ENCODE measurements at regions of chr1 and their contacts with region 1.

Region 1: DNA sequence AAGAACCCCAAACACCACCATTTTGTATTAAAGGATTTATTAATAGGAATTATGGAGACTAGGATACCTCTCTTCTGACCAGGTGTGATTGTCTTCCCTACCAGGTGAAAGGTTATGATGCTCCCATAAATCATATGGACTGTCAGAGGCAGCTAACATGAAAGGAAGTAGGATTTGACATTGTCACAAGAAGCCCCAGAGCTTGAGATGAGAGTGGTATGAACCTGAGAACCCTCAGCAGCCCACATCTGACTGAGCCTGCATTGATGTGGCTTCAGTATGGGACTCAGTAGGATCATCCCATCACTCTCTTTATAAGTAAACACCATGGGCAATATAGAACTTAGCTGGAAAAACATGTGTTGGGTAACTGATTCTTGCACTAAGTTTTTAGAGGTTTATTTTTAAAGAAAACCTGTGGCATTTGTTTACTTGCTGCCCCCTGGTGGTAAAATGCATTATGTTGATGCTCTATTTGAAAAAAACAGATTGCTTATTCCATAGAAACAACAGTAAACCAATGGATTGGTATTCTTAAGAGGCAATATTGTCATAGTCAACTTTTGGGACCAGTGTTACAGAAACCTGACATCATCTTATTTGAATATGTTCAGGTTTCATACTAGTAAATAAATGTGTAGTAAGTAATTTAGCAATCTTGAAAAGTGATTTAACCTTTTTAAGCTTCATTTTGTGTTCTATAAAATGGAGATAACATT is 16.6 kb upstream of the CACYBP start:
- H3K4me3 ChIP-seq: no peak overlapping the region
- H3K27ac ChIP-seq: no peak overlapping the region
- H3K4me1 ChIP-seq: no peaks in the 10 kb centered on the region
- CTCF ChIP-seq: no peak

Region 2: GRCh38 chr1:174769961-174770549 is 213.1 kb before region 1 on chr1:
- CTCF ChIA-PET with region 1: interaction called, 19 read pairs
- POLR2A ChIA-PET with region 1: no interaction called
- H3K4me3 ChIP-seq: no peak overlapping the region
- H3K27ac ChIP-seq: no peak overlapping the region
- H3K4me1 ChIP-seq: no peaks in the 10 kb centered on the region
- CTCF ChIP-seq: peak; percentile 60

Measured in HEK293 (cell line).